Cardiac septum (tissue), 1 donor: ENCODE measurements at regions of chr22 and their contacts with region 1.

Region 1: GRCh38 chr22:19717691-19718455 is 3.6 kb downstream of the SEPTIN5 start:
- DNase-seq: peak; percentile 92

Region 2: DNA sequence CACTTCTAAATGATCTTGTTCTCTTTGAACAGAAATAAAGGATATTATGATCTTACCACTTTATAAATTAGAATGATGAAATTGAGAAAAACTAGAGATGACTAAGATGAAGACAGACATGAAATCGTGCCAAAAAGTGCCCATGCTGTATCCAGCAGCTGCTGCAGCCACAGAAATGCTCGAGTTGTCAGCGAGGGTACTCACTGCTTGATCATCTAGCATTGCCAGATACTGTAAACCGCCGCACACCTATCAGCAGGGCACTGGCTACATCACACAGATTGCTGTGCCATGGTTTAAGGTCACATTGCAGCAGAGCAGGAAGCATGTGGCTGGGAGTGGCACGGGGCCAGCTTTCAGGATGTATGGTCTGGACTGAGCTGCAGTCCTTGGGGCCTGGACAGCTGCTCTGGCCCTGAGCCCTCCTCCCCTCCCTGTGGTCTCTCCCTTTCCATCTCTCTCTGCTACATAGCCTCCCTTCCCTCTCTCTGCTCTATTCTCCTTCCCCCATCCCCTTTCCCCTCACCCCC is 54.5 kb before region 1 on chr22:
- intact Hi-C with region 1: loop called (anchors 10 kb)
- DNase-seq: peak; percentile 85

Region 3: GRCh38 chr22:19679522-19680101 is 38.3 kb before region 1 on chr22:
- intact Hi-C with region 1: loop called (anchors 1 kb)
- DNase-seq: peak; percentile 83

Region 4: DNA sequence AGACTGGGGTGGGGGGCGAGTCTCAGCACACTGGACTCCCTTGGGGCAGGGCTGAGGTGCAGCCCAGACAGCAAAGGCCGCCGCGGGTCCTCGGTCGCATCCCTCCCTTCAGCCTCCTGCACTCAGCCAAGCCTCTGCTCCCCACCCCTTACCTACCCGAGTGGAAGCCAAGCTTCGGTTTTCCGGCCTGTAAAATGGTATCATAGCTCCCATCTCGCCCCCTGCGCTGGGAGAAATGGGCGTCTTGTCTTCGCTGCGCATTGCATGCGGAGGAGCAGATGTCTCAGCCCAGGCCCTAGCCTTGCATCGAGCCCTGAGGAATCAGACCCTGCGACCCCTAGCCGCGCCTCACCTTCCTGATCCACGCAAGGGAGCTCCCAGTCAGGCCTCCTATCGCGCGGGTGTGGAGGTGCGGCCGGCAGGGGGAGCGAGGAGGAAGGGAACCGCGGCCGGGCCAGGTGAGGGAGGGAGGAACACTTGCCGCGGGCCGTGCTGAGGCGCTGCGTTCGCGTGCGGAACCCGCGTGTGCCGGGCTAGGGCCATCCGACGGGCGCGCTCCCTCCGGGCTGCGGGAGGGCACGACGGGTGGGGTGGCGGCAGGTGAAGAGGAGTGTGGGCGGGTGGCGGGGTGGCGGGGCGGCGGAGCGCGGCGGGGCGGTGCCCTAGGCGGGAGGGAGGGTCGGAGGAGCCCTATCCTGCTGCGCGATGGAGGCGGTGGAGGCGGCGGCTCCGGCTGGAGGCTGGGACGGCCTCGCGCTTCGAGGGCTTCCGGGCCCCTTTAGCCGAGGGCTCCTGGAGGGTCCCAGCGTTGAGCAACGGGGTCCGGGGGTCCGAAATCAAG is 38.6 kb after region 1 on chr22:
- intact Hi-C with region 1: no loop called
- DNase-seq: no peak

Region 5: DNA sequence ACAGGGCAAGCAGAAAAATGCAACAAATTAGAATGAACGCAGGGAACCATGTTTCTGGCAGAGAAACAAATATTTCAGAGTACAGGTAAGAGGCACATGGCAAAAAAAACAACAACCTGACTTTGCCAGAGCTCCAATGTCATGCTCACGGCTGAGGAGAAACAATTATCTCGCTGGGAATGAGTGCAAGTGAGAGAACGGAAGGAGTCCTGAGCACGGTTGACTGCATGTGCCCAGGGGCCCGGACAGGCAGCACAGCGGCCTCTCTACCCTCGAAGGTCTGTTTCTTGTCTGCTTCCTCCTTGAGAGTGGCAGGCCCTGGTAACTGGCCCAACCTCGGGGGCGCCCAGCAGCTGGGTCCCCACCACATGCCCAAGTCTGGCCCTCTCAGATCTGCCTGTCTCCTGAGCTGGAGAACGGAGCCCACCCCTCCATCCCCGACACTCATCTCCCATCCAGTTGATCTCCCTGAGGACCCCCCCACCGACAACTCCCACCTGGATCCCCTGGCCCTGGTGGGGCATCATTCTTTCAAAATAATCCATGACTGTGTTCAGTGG is 574.9 kb after region 1 on chr22:
- intact Hi-C with region 1: no loop called
- DNase-seq: no peak